ENCODE measurements at regions of chr17 and their contacts with region 1.

Region 1: DNA sequence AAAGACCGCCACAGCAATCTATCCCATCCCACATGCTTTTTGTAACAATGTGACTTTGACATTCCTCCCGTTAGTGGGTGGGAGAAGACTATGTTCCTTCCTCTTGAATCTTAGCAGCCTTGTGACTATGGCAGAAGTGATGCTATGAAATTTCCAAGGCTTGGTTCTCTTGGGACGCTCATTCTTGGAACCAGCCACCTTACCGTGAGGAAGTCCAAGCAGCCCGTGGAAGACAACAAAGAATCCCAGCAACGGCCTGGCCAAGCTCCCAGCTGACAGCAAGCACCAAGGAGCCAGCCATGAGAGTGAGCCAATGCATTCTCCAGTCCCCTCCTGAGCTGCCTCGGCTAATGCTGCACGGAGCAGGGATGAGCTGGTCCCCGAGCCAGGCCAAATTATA is 62.3 kb downstream of the VPS53 start:
- DNase-seq: peak; percentile 93
- ATAC-seq: peak; percentile 97

Region 2: DNA sequence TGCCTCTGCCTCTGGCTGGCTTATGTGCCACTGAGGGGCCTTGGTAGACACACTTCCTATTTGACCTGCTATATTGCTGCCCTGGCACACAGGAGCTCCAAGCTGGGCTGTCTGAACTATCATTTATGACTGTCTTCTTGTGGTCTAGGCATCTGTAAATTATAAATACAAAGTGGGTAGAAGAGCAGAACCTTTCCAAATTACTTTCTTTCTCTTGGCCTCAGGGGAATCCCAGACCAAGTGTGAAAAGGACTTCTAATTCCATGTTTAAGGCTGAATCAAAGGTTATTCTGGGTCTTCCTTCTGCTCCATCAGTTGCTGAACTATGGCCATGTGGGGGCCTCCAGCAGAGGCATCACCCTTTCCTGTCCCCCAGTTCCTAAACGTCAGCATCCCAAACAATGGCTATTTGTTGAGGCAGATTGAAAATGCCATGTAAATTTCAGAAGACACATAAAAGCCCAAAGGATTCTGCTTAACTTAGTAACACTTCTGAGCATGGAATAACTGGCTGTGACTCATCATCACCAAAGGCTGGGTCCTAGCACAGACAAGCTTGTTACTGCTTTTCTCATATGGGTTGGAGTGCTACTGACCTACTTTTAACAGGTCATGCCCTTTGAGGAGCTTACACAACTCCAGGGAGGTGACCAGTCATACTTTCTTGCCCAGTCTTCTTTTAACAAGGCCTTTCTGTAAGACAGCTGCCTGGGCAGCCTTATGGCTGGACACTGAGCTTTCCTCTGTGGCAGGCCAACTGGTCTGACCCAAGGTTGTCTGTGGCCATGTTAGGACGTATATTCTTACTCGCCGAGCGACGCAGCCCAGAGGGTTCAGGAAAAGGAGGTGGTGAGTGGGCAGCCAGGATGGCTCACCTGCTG is 92.5 kb before region 1 on chr17:
- intact Hi-C with region 1: loop called (anchors 5 kb)
- DNase-seq: peak; percentile 56
- ATAC-seq: peak; percentile 94